ENCODE measurements at regions of chr19 and their contacts with region 1.

Region 1: GRCh38 chr19:58117841-58118575 is 20.0 kb upstream of the ZSCAN18 start:
- H3K4me3 ChIP-seq: no peak overlapping the region
- H3K27ac ChIP-seq: no peak overlapping the region
- H3K4me1 ChIP-seq: no peaks in the 10 kb centered on the region
- CTCF ChIP-seq: no peak

Region 2: GRCh38 chr19:58095328-58095727 is 22.7 kb before region 1 on chr19:
- CTCF ChIA-PET with region 1: no interaction called
- POLR2A ChIA-PET with region 1: interaction called, 11 read pairs
- H3K4me3 ChIP-seq: no peak overlapping the region
- H3K27ac ChIP-seq: no peak overlapping the region
- H3K4me1 ChIP-seq: no peaks in the 10 kb centered on the region
- CTCF ChIP-seq: no peak

Region 3: GRCh38 chr19:58128041-58128685 is 10.2 kb after region 1 on chr19:
- CTCF ChIA-PET with region 1: no interaction called
- POLR2A ChIA-PET with region 1: no interaction called
- H3K4me3 ChIP-seq: no peak overlapping the region
- H3K27ac ChIP-seq: no peak overlapping the region
- H3K4me1 ChIP-seq: no peaks in the 10 kb centered on the region
- CTCF ChIP-seq: no peak

Region 4: GRCh38 chr19:58154679-58155648 is 37.0 kb after region 1 on chr19:
- CTCF ChIA-PET with region 1: no interaction called
- POLR2A ChIA-PET with region 1: no interaction called
- H3K4me3 ChIP-seq: peak overlapping the region; percentile 97
- H3K27ac ChIP-seq: peak overlapping the region; percentile 39; the same call in 1 of the 2 replicates
- H3K4me1 ChIP-seq: no peaks in the 10 kb centered on the region
- CTCF ChIP-seq: peak; percentile 99

Region 5: DNA sequence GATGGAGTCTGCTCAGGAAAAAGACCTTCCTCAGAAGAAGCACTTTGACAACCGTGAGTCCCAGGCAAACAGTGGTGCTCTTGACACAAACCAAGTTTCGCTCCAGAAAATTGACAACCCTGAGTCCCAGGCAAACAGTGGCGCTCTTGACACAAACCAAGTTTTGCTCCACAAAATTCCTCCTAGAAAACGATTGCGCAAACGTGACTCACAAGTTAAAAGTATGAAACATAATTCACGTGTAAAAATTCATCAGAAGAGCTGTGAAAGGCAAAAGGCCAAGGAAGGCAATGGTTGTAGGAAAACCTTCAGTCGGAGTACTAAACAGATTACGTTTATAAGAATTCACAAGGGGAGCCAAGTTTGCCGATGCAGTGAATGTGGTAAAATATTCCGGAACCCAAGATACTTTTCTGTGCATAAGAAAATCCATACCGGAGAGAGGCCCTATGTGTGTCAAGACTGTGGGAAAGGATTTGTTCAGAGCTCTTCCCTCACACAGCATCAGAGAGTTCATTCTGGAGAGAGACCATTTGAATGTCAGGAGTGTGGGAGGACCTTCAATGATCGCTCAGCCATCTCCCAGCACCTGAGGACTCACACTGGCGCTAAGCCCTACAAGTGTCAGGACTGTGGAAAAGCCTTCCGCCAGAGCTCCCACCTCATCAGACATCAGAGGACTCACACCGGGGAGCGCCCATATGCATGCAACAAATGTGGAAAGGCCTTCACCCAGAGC is 94.5 kb after region 1 on chr19:
- CTCF ChIA-PET with region 1: no interaction called
- POLR2A ChIA-PET with region 1: no interaction called
- H3K4me3 ChIP-seq: no peak overlapping the region
- H3K27ac ChIP-seq: no peak overlapping the region
- H3K4me1 ChIP-seq: no peaks in the 10 kb centered on the region
- CTCF ChIP-seq: no peak

Region 6: GRCh38 chr19:58285947-58286346 is 167.9 kb after region 1 on chr19:
- CTCF ChIA-PET with region 1: no interaction called
- POLR2A ChIA-PET with region 1: no interaction called
- H3K4me3 ChIP-seq: no peak overlapping the region
- H3K27ac ChIP-seq: no peak overlapping the region
- H3K4me1 ChIP-seq: no peaks in the 10 kb centered on the region
- CTCF ChIP-seq: no peak

Measured in HEK293 (cell line).